ENCODE measurements at regions of chr1 and their contacts with region 1.

Region 1: GRCh38 chr1:85200870-85201339 is at the start of gene SYDE2:
- DNase-seq: peak; percentile 76
- H3K4me3 Mint-ChIP-seq: peak within 1 kb of the TSS; percentile 98
- H3K27ac Mint-ChIP-seq: peak within 1 kb of the TSS; percentile 89
- H3K4me1 Mint-ChIP-seq: peaks cover 33% of the 10 kb centered on the region
- H3K27me3 Mint-ChIP-seq: no peaks in the 10 kb centered on the region
- total RNA-seq, gene SYDE2: 4.4 to 5.1 TPM

Region 2: DNA sequence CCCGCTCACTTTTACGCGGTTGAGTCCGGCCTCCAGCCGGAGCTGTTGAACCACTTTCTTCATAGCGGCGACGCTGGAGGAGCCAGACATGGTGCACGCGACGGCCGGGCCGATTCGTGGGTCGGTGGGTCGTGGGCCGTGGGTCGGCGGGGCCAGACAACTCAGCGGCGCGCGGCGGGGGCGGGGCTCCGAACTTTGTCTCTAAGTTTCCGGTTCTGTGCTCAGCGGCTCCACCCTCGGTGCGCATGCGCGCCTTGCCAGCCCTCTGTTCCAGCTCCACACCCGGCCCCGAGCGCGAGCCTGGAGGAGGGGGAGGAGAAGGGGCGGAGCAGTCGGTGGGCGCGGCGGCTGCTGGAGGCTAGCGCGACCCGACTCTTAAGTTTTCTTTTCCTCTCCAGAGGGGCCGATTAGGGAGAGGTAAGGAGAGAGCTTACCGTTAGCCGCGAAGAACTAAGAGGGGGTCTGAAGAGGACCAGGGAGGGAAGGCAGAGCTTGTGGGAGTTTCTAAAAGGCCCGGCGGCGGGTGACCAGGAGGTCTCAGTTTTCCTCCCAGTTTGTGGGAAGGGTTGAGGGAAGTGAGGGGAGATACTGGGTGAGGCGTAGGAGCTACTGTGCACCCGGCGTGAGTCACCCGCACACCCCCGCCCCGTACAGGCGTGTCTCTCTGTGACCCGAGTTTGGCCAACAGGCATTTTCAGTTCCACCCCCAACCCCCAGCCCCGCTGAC is 694.7 kb before region 1 on chr1 and contains the starts of genes GNG5 and SPATA1:
- CTCF ChIA-PET with region 1: no interaction called
- intact Hi-C with region 1: loop called (anchors 5 kb)
- DNase-seq: peak; percentile 97
- H3K4me3 Mint-ChIP-seq: peak within 1 kb of the TSS; percentile 100
- H3K27ac Mint-ChIP-seq: peak within 1 kb of the TSS; percentile 98
- H3K4me1 Mint-ChIP-seq: peaks cover 27% of the 10 kb centered on the region
- H3K27me3 Mint-ChIP-seq: no peaks in the 10 kb centered on the region
- total RNA-seq, gene GNG5: 128 to 132 TPM
- total RNA-seq, gene SPATA1: 1.8 to 2.7 TPM

Region 3: GRCh38 chr1:85048296-85049064 is 152.4 kb before region 1 on chr1 and contains the start of gene MCOLN3:
- CTCF ChIA-PET with region 1: no interaction called
- intact Hi-C with region 1: loop called (anchors 1 kb)
- DNase-seq: peak; percentile 52
- H3K4me3 Mint-ChIP-seq: peak within 1 kb of the TSS; percentile 68
- H3K27ac Mint-ChIP-seq: no peak within 1 kb of the TSS
- H3K4me1 Mint-ChIP-seq: peaks cover 18% of the 10 kb centered on the region
- H3K27me3 Mint-ChIP-seq: peaks cover 33% of the 10 kb centered on the region
- total RNA-seq, gene MCOLN3: 0.19 to 0.30 TPM

Region 4: GRCh38 chr1:85148524-85149250 is 52.2 kb before region 1 on chr1:
- CTCF ChIA-PET with region 1: no interaction called
- intact Hi-C with region 1: loop called (anchors 2 kb)
- DNase-seq: peak; percentile 51
- H3K4me3 Mint-ChIP-seq: no peak overlapping the region
- H3K27ac Mint-ChIP-seq: no peak overlapping the region
- H3K4me1 Mint-ChIP-seq: peaks cover 19% of the 10 kb centered on the region
- H3K27me3 Mint-ChIP-seq: no peaks in the 10 kb centered on the region

Region 5: DNA sequence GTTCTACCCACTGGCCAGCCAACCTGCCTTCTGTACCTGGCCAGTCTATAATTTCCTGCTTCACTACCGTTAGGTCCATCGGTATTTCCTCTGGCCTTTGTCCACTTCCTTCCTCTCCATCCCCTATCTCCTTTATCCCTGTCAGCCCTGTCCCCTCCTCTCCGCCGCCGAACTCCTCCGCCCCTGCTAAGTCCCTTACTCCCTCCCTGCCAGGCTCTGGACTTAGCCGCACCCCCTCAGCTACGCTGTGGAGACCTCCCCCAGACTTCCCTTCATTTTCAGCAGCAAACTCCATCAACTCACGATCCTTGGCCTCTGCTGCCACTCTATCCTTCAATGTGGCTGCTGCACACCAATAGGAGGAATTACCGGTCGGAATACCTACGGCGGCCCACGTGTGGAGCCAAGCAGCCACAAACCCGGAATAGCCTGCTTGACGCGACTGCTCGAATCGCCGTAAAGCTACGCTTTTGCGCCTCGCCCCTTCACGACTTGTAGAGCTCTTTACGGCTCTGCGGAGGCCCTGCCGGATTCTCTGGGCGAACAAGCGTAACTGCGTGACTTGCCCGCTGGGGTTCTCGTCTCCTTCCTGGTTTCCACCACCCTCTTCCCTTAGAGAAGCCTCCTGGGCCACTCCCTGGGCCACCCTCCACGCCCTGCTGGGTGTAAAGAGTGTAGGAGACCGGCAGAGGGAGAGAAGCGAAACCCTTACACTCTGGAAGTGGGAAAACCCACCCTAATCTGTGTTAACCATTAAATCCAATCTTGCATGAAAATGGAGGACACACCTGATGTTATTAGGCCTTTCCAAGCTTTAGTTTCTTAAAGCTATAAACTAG is 507.3 kb after region 1 on chr1 and contains the start of gene ZNHIT6:
- CTCF ChIA-PET with region 1: no interaction called
- intact Hi-C with region 1: loop called (anchors 2 kb)
- DNase-seq: peak; percentile 93
- H3K4me3 Mint-ChIP-seq: no peak within 1 kb of the TSS
- H3K27ac Mint-ChIP-seq: no peak within 1 kb of the TSS
- H3K4me1 Mint-ChIP-seq: peaks cover 21% of the 10 kb centered on the region
- H3K27me3 Mint-ChIP-seq: no peaks in the 10 kb centered on the region
- total RNA-seq, gene ZNHIT6: 19.8 to 19.9 TPM

Region 6: GRCh38 chr1:85850238-85850637 is 649.3 kb after region 1 on chr1:
- CTCF ChIA-PET with region 1: no interaction called
- intact Hi-C with region 1: no loop called
- DNase-seq: no peak
- H3K4me3 Mint-ChIP-seq: no peak overlapping the region
- H3K27ac Mint-ChIP-seq: no peak overlapping the region
- H3K4me1 Mint-ChIP-seq: no peaks in the 10 kb centered on the region
- H3K27me3 Mint-ChIP-seq: no peaks in the 10 kb centered on the region

Measured in activated naive CD4-positive, alpha-beta T cell treated with anti-CD3 and anti-CD28 coated beads for 36 hours (primary cell).